Heart left ventricle (tissue), 16 donors: ENCODE measurements at regions of chr7 and their contacts with region 1.

Region 1: GRCh38 chr7:68601826-68602225 is 996.4 kb upstream of the AUTS2 start:
- DNase-seq: peak in 1 of 5 donors; percentile 5
- ATAC-seq: no peak
- H3K4me3 ChIP-seq: no peak overlapping the region
- H3K27ac ChIP-seq: no peak overlapping the region
- H3K4me1 ChIP-seq: no peaks in the 10 kb centered on the region
- H3K27me3 ChIP-seq: no peaks in the 10 kb centered on the region
- CTCF ChIP-seq: no peak
- POLR2A ChIP-seq: no peak

Region 2: DNA sequence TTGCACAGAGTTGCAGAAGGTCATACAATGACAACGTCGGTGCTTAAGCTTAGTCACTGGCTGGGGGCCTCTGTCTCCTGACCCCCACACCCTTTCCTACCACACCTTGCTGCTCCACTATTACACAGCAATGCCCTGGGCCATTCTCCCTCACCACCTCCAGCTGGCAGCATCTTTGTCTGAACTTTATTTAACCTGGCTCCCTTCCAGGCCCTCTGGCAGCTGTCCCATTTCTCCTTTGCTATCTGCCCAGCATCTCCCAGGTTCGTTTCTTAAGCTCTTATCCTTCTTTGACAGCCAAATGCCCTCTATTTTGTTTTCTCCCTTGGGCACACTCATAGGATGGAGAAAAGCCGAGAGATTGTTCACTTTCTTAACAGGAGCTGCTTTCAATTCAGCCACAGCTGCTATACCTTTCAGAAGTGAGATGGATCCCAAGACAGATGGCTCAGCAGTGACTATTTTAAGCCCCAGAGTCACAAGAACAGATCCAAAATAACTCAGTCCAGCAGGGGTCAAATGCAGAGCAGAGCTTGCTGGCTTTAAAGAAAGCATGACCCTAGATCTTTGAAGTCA is 280.7 kb before region 1 on chr7:
- intact Hi-C with region 1: no loop called
- DNase-seq: peak in 4 of 5 donors; percentile 35 to 69 (median 54)
- ATAC-seq: peak; percentile 95 to 99 (median 97)
- H3K4me3 ChIP-seq: peak overlapping the region in 5 of 12 donors; percentile 5 to 22 (median 18)
- H3K27ac ChIP-seq: peak overlapping the region; percentile 48 to 87 (median 74)
- H3K4me1 ChIP-seq: peaks cover 0 to 37% (median 23%) of the 10 kb centered on the region in 12 donors
- H3K27me3 ChIP-seq: no peaks in the 10 kb centered on the region
- CTCF ChIP-seq: peak in 2 of 12 donors; percentile 6 to 13
- POLR2A ChIP-seq: no peak

Region 3: GRCh38 chr7:68488341-68489060 is 113.3 kb before region 1 on chr7:
- intact Hi-C with region 1: no loop called
- DNase-seq: no peak
- ATAC-seq: no peak
- H3K4me3 ChIP-seq: no peak overlapping the region
- H3K27ac ChIP-seq: no peak overlapping the region
- H3K4me1 ChIP-seq: no peaks in the 10 kb centered on the region
- H3K27me3 ChIP-seq: peaks cover 0 to 4% (median 0%) of the 10 kb centered on the region in 9 donors
- CTCF ChIP-seq: no peak
- POLR2A ChIP-seq: no peak

Region 4: GRCh38 chr7:68663392-68663791 is 61.6 kb after region 1 on chr7:
- intact Hi-C with region 1: loop called in 1 of 10 experiments (anchors 10 kb)
- DNase-seq: no peak
- ATAC-seq: no peak
- H3K4me3 ChIP-seq: no peak overlapping the region
- H3K27ac ChIP-seq: no peak overlapping the region
- H3K4me1 ChIP-seq: no peaks in the 10 kb centered on the region
- H3K27me3 ChIP-seq: no peaks in the 10 kb centered on the region
- CTCF ChIP-seq: no peak
- POLR2A ChIP-seq: no peak

Region 5: GRCh38 chr7:68977385-68978055 is 375.7 kb after region 1 on chr7:
- intact Hi-C with region 1: loop called in 1 of 10 experiments (anchors 10 kb)
- DNase-seq: no peak
- ATAC-seq: peak in 2 of 4 donors; percentile 57 to 68
- H3K4me3 ChIP-seq: no peak overlapping the region
- H3K27ac ChIP-seq: peak overlapping the region in 1 of 12 donors; percentile 6
- H3K4me1 ChIP-seq: no peaks in the 10 kb centered on the region
- H3K27me3 ChIP-seq: peaks cover 0 to 6% (median 0%) of the 10 kb centered on the region in 9 donors
- CTCF ChIP-seq: no peak
- POLR2A ChIP-seq: no peak